ENCODE measurements at regions of chr21 and their contacts with region 1.

Region 1: GRCh38 chr21:32569261-32570230 is 15.8 kb downstream of the TCP10L start:
- DNase-seq: peak; percentile 27 to 95 (median 69)

Region 2: GRCh38 chr21:32412162-32413014 is 157.2 kb before region 1 on chr21 and contains the start of gene EVA1C:
- intact Hi-C with region 1: loop called (anchors 1 kb)
- DNase-seq: peak in 9 of 10 donors; percentile 36 to 92 (median 50)

Region 3: DNA sequence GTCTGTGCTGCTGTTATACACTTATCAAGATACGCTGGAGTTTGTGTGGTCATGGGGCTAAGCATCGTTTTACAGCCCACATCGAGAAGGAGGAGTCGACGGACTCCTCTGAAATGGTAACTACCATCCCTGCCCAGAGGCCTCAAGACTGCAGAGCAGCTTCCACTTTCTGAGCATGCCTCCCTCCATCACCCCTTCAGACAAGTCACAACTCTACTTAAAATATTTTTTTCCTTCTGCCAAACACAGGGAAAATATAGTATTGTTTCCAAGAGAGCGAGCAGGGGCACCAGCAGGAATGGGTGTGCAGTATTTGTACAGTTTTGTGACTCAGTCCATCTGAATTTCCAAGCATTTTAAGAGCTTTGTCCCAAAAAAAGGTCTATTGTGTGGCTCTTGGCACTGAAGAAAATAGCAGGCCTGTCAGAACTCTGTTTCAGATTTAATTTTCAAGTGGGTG is 142.9 kb before region 1 on chr21:
- intact Hi-C with region 1: loop called (anchors 5 kb)
- DNase-seq: peak in 1 of 10 donors; percentile 27

Region 4: DNA sequence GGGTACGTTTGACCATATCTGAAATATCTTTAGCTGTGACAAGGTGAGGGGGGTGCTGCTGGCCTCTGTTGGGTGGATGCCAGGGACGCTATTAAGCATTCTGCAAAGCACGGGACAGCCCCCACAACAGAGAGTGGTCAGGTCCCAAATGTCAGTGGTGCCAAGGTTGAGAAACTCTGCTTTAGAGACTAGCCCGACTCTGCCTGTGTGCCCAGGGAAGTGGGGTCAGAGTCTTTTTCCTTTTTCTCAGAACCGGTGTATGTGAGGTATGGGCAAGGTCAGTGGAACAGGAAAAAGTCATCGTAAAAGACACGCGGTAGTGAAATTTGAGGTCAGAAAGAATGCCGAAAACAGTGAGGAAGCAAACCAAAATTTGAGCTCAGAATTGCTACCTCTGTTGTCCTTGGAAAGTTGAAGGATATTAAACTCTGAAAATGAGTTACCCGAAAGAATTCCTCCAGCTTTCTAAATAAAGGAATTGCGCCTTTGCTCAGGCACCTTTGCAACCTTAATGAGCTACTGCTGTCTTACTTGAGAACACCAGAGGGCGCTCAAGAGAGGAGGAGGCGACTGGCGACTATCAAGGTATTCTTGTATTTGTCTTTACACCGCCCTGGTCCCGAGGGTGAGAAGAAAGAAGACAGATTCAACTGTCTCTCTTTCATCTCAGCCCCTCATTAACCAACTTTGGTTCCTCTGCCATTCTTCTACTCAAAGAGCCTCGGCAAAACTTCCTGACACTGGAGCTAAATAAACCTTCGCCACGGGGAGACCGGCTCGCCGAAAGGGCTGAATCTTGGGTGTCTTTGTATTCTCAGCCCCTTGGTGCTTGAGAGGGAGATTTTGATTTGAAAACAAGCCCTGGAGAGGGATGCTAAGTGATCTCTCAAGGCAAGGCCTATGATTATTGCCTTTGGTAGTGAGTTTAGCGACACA is 370.8 kb after region 1 on chr21:
- intact Hi-C with region 1: no loop called
- DNase-seq: peak in 3 of 10 donors; percentile 42 to 64 (median 46)

Region 5: GRCh38 chr21:32994305-32994704 is 424.8 kb after region 1 on chr21:
- intact Hi-C with region 1: no loop called
- DNase-seq: no peak

Measured in posterior cingulate gyrus (tissue), 11 donors.